Vagina (tissue), 2 donors: ENCODE measurements at regions of chr2 and their contacts with region 1.

Region 1: DNA sequence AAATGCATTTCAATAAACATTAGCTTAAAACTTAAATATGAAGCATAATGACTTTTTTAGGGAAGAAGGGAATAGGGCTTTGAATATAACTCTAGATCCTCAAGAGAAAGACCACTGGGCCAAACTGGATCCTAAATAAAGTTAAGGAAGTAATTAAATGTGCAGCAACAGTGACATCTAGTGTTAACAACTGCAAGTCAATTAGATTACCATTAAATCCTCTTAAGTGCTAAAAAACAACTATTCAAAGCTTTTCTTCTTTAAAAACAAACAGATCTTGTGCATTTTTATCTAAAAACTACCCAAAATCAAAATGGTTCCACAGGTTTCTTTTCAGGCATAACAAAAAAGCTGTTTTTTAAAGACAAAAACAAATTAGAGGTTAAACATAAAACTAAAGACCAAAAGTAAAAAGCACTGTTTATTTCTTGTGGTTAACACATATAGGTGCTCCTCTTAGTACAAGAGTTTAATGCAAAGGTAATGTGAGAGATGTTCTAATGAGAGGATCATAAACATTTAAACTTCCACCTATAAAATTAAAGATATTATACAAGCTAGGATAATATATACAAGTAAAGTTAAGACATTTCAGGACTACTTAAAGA is 111.4 kb downstream of the THADA start:
- DNase-seq: no peak
- H3K4me3 ChIP-seq: no peak overlapping the region
- H3K27ac ChIP-seq: peak overlapping the region; percentile 63
- H3K4me1 ChIP-seq: peaks cover 33% of the 10 kb centered on the region
- H3K27me3 ChIP-seq: no peaks in the 10 kb centered on the region
- CTCF ChIP-seq: peak; percentile 56 to 78 (median 58)
- POLR2A ChIP-seq: no peak

Region 2: GRCh38 chr2:42828487-42829425 is 655.7 kb before region 1 on chr2:
- intact Hi-C with region 1: loop called (anchors 5 kb)
- DNase-seq: peak; percentile 90 to 95
- H3K4me3 ChIP-seq: no peak overlapping the region
- H3K27ac ChIP-seq: peak overlapping the region; percentile 78
- H3K4me1 ChIP-seq: peaks cover 30% of the 10 kb centered on the region
- H3K27me3 ChIP-seq: no peaks in the 10 kb centered on the region
- CTCF ChIP-seq: peak; percentile 90 to 93 (median 90)
- POLR2A ChIP-seq: no peak

Region 3: GRCh38 chr2:42959234-42960001 is 525.0 kb before region 1 on chr2:
- intact Hi-C with region 1: loop called (anchors 10 kb)
- DNase-seq: no peak
- H3K4me3 ChIP-seq: no peak overlapping the region
- H3K27ac ChIP-seq: peak overlapping the region; percentile 87
- H3K4me1 ChIP-seq: peaks cover 78% of the 10 kb centered on the region
- H3K27me3 ChIP-seq: no peaks in the 10 kb centered on the region
- CTCF ChIP-seq: no peak
- POLR2A ChIP-seq: no peak

Region 4: GRCh38 chr2:43266711-43267111 is 217.7 kb before region 1 on chr2:
- intact Hi-C with region 1: no loop called
- DNase-seq: no peak
- H3K4me3 ChIP-seq: no peak overlapping the region
- H3K27ac ChIP-seq: peak overlapping the region; percentile 88
- H3K4me1 ChIP-seq: peaks cover 41% of the 10 kb centered on the region
- H3K27me3 ChIP-seq: no peaks in the 10 kb centered on the region
- CTCF ChIP-seq: no peak
- POLR2A ChIP-seq: no peak